Activated T-helper 1 cell treated with anti-CD3 and anti-CD28 coated beads, Interleukin-12 subunit alpha, Interleukin-12 subunit beta, Interleukin-2, Interleukin-4 antibody, amounts not matched to agents 30 ng/mL and 10 ng/mL and 1 ng/mL, durations not matched to agents 14 hours and 24 hours and 36 hours (primary cell): ENCODE measurements at regions of chr18 and their contacts with region 1.

Region 1: GRCh38 chr18:24726727-24727492 is 266.5 kb downstream of the HRH4 start:
- DNase-seq: peak; percentile 8
- H3K4me3 Mint-ChIP-seq: no peak overlapping the region
- H3K27ac Mint-ChIP-seq: no peak overlapping the region
- H3K4me1 Mint-ChIP-seq: no peaks in the 10 kb centered on the region
- H3K27me3 Mint-ChIP-seq: peaks cover 4% of the 10 kb centered on the region

Region 2: GRCh38 chr18:24436939-24437338 is 290.0 kb before region 1 on chr18:
- intact Hi-C with region 1: no loop called
- DNase-seq: no peak
- H3K4me3 Mint-ChIP-seq: no peak overlapping the region
- H3K27ac Mint-ChIP-seq: no peak overlapping the region
- H3K4me1 Mint-ChIP-seq: no peaks in the 10 kb centered on the region
- H3K27me3 Mint-ChIP-seq: no peaks in the 10 kb centered on the region

Region 3: DNA sequence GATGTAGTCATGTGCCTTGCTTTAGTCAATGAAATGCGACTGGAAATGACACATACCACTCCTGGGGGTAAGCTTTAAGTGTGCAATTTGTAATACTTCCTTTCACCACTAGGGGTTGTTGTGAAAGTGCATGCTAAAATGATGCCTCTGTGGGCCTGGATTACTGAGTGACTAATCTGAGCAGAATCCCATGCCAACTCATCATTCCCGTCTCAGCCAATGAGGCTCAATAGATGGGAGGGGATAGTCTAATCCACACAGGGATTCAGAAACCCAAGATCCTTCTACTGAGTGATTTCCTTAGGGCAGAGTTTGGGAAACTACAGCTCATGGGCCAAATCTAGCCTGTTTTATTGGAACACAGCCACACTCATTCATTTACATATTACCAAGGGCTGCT is 212.5 kb before region 1 on chr18:
- intact Hi-C with region 1: loop called (anchors 10 kb)
- DNase-seq: no peak
- H3K4me3 Mint-ChIP-seq: no peak overlapping the region
- H3K27ac Mint-ChIP-seq: no peak overlapping the region
- H3K4me1 Mint-ChIP-seq: no peaks in the 10 kb centered on the region
- H3K27me3 Mint-ChIP-seq: peaks cover 6% of the 10 kb centered on the region

Region 4: DNA sequence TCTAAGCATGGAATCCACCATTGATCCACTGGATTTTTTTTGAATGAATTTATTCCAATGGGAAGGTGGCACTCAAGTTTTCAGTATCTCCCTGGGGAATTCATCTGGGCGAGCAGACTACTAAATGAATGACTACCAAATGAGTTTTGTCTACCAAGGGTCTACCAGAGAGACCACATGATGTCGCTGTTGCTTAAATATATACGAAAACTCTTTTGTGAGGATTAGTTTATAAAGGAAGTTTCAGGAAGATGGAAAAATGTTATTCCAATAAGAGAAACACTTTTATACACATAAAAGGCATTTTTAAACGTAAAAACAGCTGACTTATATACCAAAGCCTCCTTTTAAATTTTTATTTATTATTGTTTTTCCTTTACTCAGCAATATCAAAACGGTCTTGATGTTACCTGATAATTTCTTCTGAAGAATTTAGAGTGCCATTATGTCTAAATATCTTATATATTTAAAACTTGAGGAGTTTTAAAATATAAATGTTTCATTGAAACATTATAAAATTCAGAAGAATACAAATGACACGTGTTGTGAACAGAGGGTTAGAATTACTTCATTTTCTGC is 126.7 kb before region 1 on chr18:
- intact Hi-C with region 1: loop called (anchors 1 kb)
- DNase-seq: no peak
- H3K4me3 Mint-ChIP-seq: no peak overlapping the region
- H3K27ac Mint-ChIP-seq: no peak overlapping the region
- H3K4me1 Mint-ChIP-seq: no peaks in the 10 kb centered on the region
- H3K27me3 Mint-ChIP-seq: peaks cover 13% of the 10 kb centered on the region

Region 5: GRCh38 chr18:24659827-24660720 is 66.8 kb before region 1 on chr18:
- intact Hi-C with region 1: loop called (anchors 5 kb)
- DNase-seq: peak; percentile 16
- H3K4me3 Mint-ChIP-seq: peak overlapping the region; percentile 72
- H3K27ac Mint-ChIP-seq: no peak overlapping the region
- H3K4me1 Mint-ChIP-seq: peaks cover 12% of the 10 kb centered on the region
- H3K27me3 Mint-ChIP-seq: peaks cover 2% of the 10 kb centered on the region